ENCODE measurements at regions of chr22 and their contacts with region 1.

Region 1: GRCh38 chr22:42889304-42889703 is 32.2 kb upstream of the ARFGAP3 start:
- DNase-seq: no peak
- H3K4me3 ChIP-seq: no peak overlapping the region
- H3K27ac ChIP-seq: no peak overlapping the region
- H3K27me3 ChIP-seq: no peaks in the 10 kb centered on the region
- CTCF ChIP-seq: no peak

Region 2: DNA sequence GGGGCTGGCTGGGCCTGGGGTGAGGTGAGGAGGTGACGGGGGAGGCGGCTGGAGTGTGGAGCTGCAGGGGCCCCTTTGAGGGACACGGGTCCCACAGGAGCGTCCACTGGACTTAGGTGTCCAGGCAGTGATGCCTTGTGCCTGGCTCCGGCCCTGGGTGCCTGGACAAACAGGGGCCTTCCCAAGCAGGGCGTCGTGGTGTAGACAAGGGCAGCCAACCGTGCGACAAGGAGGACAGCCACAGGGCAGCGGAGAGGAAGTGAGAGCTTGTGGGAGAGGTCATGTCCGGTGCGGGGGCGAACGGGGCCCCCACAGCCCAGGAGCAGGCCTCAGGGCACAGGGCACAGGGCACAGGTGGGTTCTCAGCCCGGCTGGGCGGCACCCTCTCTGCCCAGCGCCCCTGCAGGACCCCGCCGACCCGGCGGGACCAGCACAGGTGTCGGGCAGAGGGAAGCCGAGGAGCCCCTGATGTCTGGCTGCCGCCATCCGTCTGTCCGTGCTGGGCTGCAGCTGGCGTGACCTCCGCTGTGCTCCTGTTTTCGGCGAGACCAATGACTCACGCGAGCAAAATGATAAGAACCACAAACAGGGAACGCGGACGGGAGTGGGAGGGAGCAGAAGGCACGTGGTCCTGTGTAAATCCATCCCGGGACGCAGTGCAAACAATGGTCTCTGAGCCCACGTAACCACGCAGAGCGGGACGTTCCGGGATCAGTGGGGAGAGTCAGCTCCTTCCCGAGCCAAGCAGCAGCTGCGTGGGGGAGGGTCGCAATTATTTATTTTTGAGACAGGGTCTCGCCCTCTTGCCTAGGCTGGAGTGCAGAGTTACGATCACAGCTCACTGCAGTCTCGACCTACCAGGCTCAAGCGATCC is 119.5 kb before region 1 on chr22:
- in situ Hi-C with region 1: no loop called
- DNase-seq: peak; percentile 90
- H3K4me3 ChIP-seq: no peak overlapping the region
- H3K27ac ChIP-seq: peak overlapping the region; percentile 33
- H3K27me3 ChIP-seq: no peaks in the 10 kb centered on the region
- CTCF ChIP-seq: no peak

Region 3: DNA sequence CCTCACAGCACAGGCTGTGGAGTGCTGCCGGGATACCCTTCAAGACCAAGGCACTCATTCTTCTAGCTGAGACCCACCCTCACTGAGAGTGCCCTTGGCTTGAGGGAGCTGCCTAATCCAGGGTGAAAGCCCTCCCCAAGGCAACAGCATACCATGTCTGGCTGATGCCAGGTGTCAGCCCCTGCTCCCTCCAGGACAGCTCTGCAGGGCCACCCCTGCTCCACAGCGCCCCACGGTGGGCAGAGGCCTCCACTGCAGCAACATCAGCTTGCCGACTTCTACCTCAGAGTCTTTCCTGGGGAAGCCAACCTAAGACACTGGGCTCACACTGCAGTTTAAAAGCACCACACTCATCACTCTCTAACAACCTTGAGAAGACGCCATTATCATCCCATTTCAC is 170.9 kb after region 1 on chr22:
- in situ Hi-C with region 1: loop called (anchors 25 kb)
- DNase-seq: no peak
- H3K4me3 ChIP-seq: no peak overlapping the region
- H3K27ac ChIP-seq: no peak overlapping the region
- H3K27me3 ChIP-seq: no peaks in the 10 kb centered on the region
- CTCF ChIP-seq: peak; percentile 83